Naive thymus-derived CD8-positive, alpha-beta T cell (primary cell): ENCODE measurements at regions of chr19 and their contacts with region 1.

Region 1: GRCh38 chr19:43619262-43620060 is at the start of gene ZNF428:
- DNase-seq: peak; percentile 78 to 92 (median 82)
- ATAC-seq: peak; percentile 89 to 90
- H3K4me3 Mint-ChIP-seq: peak within 1 kb of the TSS; percentile 95 to 99 (median 98)
- H3K27ac Mint-ChIP-seq: peak within 1 kb of the TSS; percentile 94 to 99 (median 98)
- H3K4me1 Mint-ChIP-seq: peaks cover 20 to 51% (median 40%) of the 10 kb centered on the region in 4 donors
- H3K27me3 Mint-ChIP-seq: no peaks in the 10 kb centered on the region
- polyA plus RNA-seq, gene ZNF428: 16.5 to 20.6 (median 18.3) TPM

Region 2: DNA sequence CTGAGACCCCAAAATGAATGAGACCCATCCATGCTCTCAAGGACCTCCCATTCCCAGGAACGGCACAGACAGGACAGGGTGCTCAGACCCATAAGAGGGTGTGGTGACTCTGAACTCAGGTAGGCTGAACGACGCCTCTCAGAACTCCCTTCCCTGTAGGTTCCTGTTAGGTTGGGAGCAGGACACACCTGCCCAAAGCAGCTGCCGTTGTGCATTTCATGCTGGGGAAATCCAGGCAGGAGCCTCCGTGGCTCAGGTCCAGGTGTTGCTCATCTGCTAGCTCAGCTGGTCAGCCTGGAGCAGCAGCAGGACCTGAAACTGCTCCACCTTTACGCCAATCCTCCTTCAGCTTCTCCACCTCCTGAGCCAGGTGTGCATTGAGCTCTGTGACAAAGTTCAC is 223.9 kb before region 1 on chr19:
- POLR2A ChIA-PET with region 1: no interaction called
- DNase-seq: no peak
- ATAC-seq: no peak
- H3K4me3 Mint-ChIP-seq: no peak overlapping the region
- H3K27ac Mint-ChIP-seq: no peak overlapping the region
- H3K4me1 Mint-ChIP-seq: peaks cover 0 to 4% (median 0%) of the 10 kb centered on the region in 4 donors
- H3K27me3 Mint-ChIP-seq: peaks cover 17 to 37% (median 26%) of the 10 kb centered on the region in 5 donors

Region 3: GRCh38 chr19:43606569-43607229 is 12.8 kb before region 1 on chr19:
- POLR2A ChIA-PET with region 1: interaction called, 12 read pairs
- DNase-seq: no peak
- ATAC-seq: no peak
- H3K4me3 Mint-ChIP-seq: peak overlapping the region in 2 of 10 donors; percentile 16 to 20
- H3K27ac Mint-ChIP-seq: peak overlapping the region in 8 of 10 donors; percentile 35 to 90 (median 70)
- H3K4me1 Mint-ChIP-seq: peaks cover 18 to 23% (median 22%) of the 10 kb centered on the region in 4 donors
- H3K27me3 Mint-ChIP-seq: no peaks in the 10 kb centered on the region